MCF 10A (cell line): ENCODE measurements at regions of chr1 and their contacts with region 1.

Region 1: DNA sequence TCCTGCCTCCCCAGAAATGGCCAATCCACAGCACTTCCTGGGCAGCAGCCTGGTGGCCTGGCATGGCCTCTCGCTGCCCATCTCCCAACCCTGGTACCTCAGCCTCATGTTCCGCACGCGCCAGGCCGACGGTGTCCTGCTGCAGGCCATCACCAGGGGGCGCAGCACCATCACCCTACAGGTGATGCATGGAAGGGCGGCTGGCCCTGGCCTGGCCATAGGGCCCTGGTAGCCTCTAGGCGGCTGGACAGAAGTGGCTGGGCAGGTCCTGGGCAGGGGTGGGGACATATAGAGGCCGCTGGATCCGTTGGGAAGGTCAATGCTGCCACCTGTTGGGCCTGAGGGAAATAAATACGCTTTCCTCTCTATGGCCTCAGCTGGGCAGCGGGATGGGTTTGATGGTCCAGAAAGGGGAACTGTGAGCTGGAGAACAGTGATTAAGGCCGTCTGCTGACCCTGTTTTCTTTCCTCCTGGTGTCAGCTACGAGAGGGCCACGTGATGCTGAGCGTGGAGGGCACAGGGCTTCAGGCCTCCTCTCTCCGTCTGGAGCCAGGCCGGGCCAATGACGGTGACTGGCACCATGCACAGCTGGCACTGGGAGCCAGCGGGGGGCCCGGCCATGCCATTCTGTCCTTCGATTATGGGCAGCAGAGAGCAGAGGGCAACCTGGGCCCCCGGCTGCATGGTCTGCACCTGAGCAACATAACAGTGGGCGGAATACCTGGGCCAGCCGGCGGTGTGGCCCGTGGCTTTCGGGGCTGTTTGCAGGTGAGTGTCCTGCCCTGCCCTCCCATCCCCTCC is 14.5 kb downstream of the CELSR2 start:
- DNase-seq: peak; percentile 94
- H3K4me3 Mint-ChIP-seq: peak overlapping the region; percentile 47
- H3K27ac Mint-ChIP-seq: no peak overlapping the region
- H3K4me1 Mint-ChIP-seq: peaks cover 24% of the 10 kb centered on the region
- H3K27me3 Mint-ChIP-seq: no peaks in the 10 kb centered on the region
- CTCF ChIP-seq: peak; percentile 99

Region 2: GRCh38 chr1:109193653-109194590 is 69.9 kb before region 1 on chr1:
- CTCF ChIA-PET with region 1: interaction called, 10 read pairs
- POLR2A ChIA-PET with region 1: interaction called, 7 read pairs
- intact Hi-C with region 1: no loop called
- DNase-seq: peak; percentile 58
- H3K4me3 Mint-ChIP-seq: no peak overlapping the region
- H3K27ac Mint-ChIP-seq: no peak overlapping the region
- H3K4me1 Mint-ChIP-seq: peaks cover 24% of the 10 kb centered on the region
- H3K27me3 Mint-ChIP-seq: no peaks in the 10 kb centered on the region
- CTCF ChIP-seq: peak; percentile 59

Region 3: GRCh38 chr1:109201123-109201703 is 62.6 kb before region 1 on chr1:
- CTCF ChIA-PET with region 1: interaction called, 10 read pairs
- POLR2A ChIA-PET with region 1: interaction called, 7 read pairs
- intact Hi-C with region 1: loop called (anchors 1 kb)
- DNase-seq: peak; percentile 93
- H3K4me3 Mint-ChIP-seq: no peak overlapping the region
- H3K27ac Mint-ChIP-seq: no peak overlapping the region
- H3K4me1 Mint-ChIP-seq: peaks cover 28% of the 10 kb centered on the region
- H3K27me3 Mint-ChIP-seq: no peaks in the 10 kb centered on the region
- CTCF ChIP-seq: peak; percentile 76

Region 4: GRCh38 chr1:109239580-109240095 is 24.2 kb before region 1 on chr1:
- CTCF ChIA-PET with region 1: interaction called, 7 read pairs
- POLR2A ChIA-PET with region 1: interaction called, 13 read pairs
- intact Hi-C with region 1: loop called (anchors 1 kb)
- DNase-seq: peak; percentile 75
- H3K4me3 Mint-ChIP-seq: peak overlapping the region; percentile 2
- H3K27ac Mint-ChIP-seq: peak overlapping the region; percentile 69
- H3K4me1 Mint-ChIP-seq: peaks cover 23% of the 10 kb centered on the region
- H3K27me3 Mint-ChIP-seq: no peaks in the 10 kb centered on the region
- CTCF ChIP-seq: peak; percentile 52

Region 5: DNA sequence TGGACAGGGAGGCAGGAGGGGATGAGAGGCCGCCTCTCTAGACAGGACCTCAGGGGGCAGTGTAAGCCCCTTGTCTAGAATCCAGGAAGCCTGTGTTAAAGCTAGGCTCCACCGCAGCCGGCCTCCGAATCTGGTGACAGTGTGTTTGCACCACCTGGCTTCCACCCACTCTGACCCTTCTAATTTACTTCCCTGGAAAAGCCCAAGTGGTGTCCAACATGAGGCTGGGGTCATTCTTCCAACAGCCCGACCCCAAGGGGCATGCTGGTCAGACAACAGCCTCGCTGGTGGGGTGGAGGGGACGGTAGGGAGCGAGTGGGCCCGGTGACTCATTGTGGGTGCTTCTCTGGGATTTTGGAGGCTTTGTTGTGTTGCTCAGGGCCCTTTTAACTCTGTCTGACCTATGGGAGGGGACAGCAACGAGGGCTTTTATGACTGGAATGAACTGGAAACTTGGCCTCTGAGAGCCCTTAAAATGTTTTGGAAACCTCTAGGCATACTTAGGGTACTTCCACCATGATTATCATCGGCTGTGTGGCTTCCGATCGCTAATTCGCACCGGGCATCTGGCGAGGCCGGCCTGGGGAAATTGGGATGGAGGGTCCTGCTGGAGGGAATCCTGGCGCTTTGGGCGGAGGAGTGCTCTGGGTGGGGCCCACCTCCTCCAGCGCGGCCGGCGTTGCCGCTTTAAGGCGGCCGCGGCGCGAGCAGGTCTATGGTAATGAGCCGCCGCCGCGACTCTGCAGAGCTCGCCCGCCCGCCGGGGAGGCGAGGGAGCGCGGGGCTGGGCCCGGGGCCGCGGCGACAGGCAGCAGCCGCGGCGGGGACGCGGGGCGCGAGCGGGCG is 14.8 kb before region 1 on chr1 and contains the start of gene CELSR2:
- CTCF ChIA-PET with region 1: interaction called, 15 read pairs
- POLR2A ChIA-PET with region 1: interaction called, 4 read pairs
- intact Hi-C with region 1: no loop called
- DNase-seq: peak; percentile 72
- H3K4me3 Mint-ChIP-seq: peak within 1 kb of the TSS; percentile 64
- H3K27ac Mint-ChIP-seq: no peak within 1 kb of the TSS
- H3K4me1 Mint-ChIP-seq: no peaks in the 10 kb centered on the region
- H3K27me3 Mint-ChIP-seq: no peaks in the 10 kb centered on the region
- CTCF ChIP-seq: no peak
- total RNA-seq, gene CELSR2: 6.9 and 7.2 TPM in 2 replicates

Region 6: DNA sequence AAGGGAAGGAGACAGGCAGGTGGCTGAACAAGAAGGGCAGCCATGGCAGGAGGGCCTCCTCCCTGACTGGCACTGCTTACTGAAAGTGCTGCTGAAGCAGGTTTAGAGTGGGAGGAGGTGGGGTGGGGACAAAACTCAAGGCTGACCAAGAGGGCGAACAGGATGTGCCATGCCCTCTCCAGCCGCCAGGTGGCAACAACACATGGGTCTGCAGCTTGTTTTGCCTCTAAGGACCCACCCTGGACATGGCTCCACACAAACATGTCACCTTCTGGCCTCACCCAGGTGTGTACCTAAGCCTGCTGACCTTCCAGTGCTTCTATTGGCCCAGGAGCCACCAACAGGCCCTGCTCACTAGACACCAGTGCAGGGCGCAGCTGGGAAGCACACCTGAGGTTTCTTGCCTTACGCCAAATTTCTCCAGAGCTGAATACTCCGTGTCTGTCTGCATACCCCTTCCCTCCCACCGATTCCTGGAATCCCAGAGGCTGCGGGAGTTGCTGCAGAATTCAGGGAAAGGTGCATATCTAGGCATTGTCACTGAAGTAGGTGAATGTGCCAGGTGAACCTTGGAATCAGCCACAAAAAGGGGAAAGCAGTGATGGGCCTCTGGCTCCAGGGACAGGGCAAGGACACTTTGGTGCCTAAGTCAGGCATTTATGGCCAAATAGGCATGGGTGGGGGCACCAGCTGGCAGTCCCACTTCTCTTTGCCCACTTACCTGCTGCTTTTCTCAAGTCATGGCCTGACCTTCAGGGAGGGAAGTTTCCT is 13.8 kb after region 1 on chr1:
- CTCF ChIA-PET with region 1: interaction called, 43 read pairs
- POLR2A ChIA-PET with region 1: interaction called, 6 read pairs
- intact Hi-C with region 1: loop called (anchors 1 kb)
- DNase-seq: peak; percentile 70
- H3K4me3 Mint-ChIP-seq: no peak overlapping the region
- H3K27ac Mint-ChIP-seq: peak overlapping the region; percentile 16
- H3K4me1 Mint-ChIP-seq: peaks cover 48% of the 10 kb centered on the region
- H3K27me3 Mint-ChIP-seq: no peaks in the 10 kb centered on the region
- CTCF ChIP-seq: peak; percentile 92

Region 7: DNA sequence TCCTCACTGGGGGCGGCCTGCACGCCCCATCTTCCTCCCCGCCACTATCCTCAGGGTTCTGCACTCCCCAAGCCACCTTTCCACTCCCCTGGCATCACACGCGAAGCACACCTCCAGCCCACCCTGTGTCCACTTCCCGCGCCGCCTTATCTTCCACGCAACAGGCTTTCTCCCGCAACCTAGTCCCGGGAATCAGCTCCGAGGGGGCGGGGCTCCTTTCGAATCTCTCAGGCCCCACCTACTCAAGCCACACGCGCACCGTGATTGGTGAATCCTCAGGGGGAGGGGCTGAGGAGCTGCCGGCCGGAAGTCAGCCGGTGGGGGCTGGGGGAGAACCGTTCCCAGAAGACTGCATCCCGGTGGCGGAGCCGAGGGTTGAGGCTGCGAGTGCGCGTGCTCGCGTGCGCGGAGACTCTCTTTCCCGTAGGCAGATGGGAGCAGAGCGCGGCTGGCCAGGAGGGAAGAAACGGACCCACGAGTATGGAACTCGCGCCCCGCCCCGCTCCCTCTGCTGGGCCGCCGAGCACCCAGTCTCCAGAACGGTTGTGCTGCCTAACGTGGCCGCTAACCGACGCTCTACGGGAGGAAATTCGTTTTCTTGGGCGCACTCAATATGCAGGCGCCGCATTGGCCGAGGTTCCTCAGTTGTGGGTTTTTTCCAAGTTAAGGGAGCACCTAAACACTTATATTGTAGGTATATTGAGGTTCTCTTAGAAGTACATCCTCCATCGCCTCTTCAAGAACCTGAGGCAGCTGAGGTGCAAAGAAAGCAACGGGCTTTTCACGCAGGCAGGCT is 19.4 kb after region 1 on chr1 and contains the start of gene PSRC1:
- CTCF ChIA-PET with region 1: interaction called, 43 read pairs
- POLR2A ChIA-PET with region 1: interaction called, 6 read pairs
- intact Hi-C with region 1: loop called (anchors 1 kb)
- DNase-seq: peak; percentile 96
- H3K4me3 Mint-ChIP-seq: peak within 1 kb of the TSS; percentile 100
- H3K27ac Mint-ChIP-seq: peak within 1 kb of the TSS; percentile 96
- H3K4me1 Mint-ChIP-seq: peaks cover 27% of the 10 kb centered on the region
- H3K27me3 Mint-ChIP-seq: no peaks in the 10 kb centered on the region
- CTCF ChIP-seq: peak; percentile 22
- total RNA-seq, gene PSRC1: 13.0 and 19.4 TPM in 2 replicates